Natural killer cell (primary cell): ENCODE measurements at regions of chr20 and their contacts with region 1.

Region 1: DNA sequence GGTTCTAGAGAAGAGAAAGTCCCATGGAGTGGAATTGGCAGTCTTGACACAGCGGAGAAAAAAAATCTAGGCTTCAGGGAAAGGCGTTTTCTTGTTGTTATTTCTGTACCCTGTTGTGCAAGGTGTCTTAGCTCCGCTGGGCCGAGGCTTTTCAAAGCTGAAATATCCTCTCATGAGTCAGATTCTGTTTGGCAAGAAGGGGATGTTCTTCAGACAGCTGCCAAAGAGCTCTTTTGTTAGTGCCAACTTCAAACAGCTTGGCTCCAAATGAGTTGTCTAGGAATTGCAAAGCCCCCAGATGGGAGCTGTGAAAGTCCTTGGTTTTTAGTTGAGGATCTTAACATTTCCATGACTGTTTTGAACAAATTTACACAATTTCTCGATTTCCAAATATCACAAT is 45.6 kb downstream of the LRRN4 start:
- DNase-seq: no peak
- ATAC-seq: no peak
- H3K4me3 ChIP-seq: no peak overlapping the region
- H3K4me3 Mint-ChIP-seq: peak overlapping the region; percentile 93
- H3K27ac ChIP-seq: no peak overlapping the region
- H3K27ac Mint-ChIP-seq: peak overlapping the region; percentile 75 to 91
- H3K4me1 ChIP-seq: peaks cover 9% of the 10 kb centered on the region
- H3K4me1 Mint-ChIP-seq: peaks cover 19 to 46% of the 10 kb centered on the region in 2 donors
- H3K27me3 ChIP-seq: no peaks in the 10 kb centered on the region
- H3K27me3 Mint-ChIP-seq: no peaks in the 10 kb centered on the region
- CTCF ChIP-seq: no peak

Region 2: DNA sequence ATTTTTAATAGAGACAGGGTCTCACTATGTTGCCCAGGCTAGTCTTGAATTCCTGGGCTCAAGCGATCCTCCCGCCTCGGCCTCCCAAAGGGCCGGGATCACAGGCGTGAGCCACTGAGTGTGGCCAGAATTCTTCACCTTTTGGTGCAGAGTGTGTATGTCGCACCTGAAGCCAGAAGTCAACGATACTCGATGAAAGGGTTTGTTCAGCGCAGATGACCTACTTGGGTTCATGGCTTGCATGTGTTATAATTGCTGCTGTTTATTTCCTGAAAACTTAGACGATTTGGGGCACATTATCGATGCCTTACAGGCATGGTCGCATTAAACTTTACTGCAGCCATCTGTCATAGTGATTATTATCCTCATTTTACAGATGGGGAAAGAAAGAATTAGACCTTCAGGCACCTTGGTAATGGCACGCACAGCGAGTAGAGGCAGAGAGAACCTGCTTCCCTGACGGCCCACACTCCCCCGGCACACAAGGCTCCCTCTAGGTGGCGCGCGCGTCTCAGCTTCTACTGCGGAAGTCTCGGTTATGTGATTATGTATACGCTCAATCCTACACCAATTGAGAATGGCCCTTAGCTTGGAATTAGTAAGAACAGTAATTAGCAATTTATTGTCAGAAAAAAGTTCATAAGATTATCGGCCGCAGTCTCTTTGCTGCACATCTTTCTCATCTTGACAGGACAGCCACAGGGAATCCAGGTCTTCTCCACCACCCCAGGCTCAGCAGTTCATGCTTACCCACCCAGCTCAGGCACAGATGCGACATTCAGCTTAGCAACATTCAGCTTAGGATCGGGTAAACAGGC is 478.7 kb before region 1 on chr20:
- intact Hi-C with region 1: loop called (anchors 1 kb)
- DNase-seq: peak; percentile 76 to 89
- ATAC-seq: peak; percentile 88 to 93 (median 89)
- H3K4me3 ChIP-seq: no peak overlapping the region
- H3K4me3 Mint-ChIP-seq: peak overlapping the region; percentile 82
- H3K27ac ChIP-seq: no peak overlapping the region
- H3K27ac Mint-ChIP-seq: peak overlapping the region; percentile 61 to 68
- H3K4me1 ChIP-seq: peaks cover 20% of the 10 kb centered on the region
- H3K4me1 Mint-ChIP-seq: peaks cover 24 to 31% of the 10 kb centered on the region in 2 donors
- H3K27me3 ChIP-seq: no peaks in the 10 kb centered on the region
- H3K27me3 Mint-ChIP-seq: no peaks in the 10 kb centered on the region
- CTCF ChIP-seq: peak; percentile 59